ENCODE measurements at regions of chr2 and their contacts with region 1.

Region 1: DNA sequence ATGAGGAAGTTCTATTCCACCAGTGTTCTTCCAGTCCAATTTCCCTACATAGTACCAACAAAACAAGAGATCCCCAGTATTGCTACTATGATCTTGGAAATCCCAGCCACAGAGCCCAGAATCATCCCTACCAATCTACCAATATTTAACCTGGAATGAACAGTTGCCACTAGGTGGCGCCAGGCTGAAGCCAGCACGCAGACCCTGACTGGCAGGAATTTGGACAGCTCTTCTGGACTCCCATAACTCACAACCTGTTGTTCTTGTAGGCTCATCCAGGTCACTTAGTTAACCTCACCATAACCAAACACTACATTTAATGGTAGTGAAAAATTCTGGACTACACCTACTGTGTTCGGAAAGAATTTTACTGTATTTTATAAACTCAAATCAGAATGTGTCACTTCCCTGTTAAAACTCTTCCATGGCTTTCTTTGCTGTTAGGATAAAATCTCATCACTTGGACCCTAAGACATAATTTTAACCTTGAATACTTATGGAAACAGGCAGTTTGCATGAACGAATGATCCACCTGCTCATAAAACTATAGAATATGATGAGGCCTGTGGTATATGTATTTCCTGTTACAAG is 59.8 kb upstream of the SLC38A11 start:
- DNase-seq: peak in 1 of 2 experiments; percentile 85
- H3K4me3 ChIP-seq: no peak overlapping the region
- H3K27ac ChIP-seq: no peak overlapping the region
- H3K4me1 ChIP-seq: peaks cover 0 to 5% (median under 1%) of the 10 kb centered on the region in 4 experiments; a peak in 2 of 7 replicates
- H3K27me3 ChIP-seq: no peaks in the 10 kb centered on the region
- CTCF ChIP-seq: peak; percentile 84 to 86 (median 86)
- EP300 ChIP-seq: no peak
- POLR2A ChIP-seq: no peak
- RAD21 ChIP-seq: peak; percentile 81 to 83

Region 2: GRCh38 chr2:164992818-164993217 is 22.3 kb before region 1 on chr2:
- CTCF ChIA-PET with region 1: interaction called, 22 read pairs
- POLR2A ChIA-PET with region 1: no interaction called
- DNase-seq: no peak
- H3K4me3 ChIP-seq: no peak overlapping the region
- H3K27ac ChIP-seq: no peak overlapping the region
- H3K4me1 ChIP-seq: no peaks in the 10 kb centered on the region
- H3K27me3 ChIP-seq: no peaks in the 10 kb centered on the region
- CTCF ChIP-seq: peak in 2 of 3 experiments; percentile 47 to 48; a peak in 2 of 4 replicates
- EP300 ChIP-seq: no peak
- POLR2A ChIP-seq: no peak
- RAD21 ChIP-seq: peak; percentile 74 to 80

Region 3: GRCh38 chr2:165070076-165070475 is 54.9 kb after region 1 on chr2:
- CTCF ChIA-PET with region 1: interaction called, 34 read pairs
- POLR2A ChIA-PET with region 1: no interaction called
- DNase-seq: peak in 1 of 2 experiments; percentile 33
- H3K4me3 ChIP-seq: no peak overlapping the region
- H3K27ac ChIP-seq: peak overlapping the region; percentile 58
- H3K4me1 ChIP-seq: peaks cover 2 to 16% (median 6%) of the 10 kb centered on the region in 4 experiments; a peak in 5 of 7 replicates
- H3K27me3 ChIP-seq: no peaks in the 10 kb centered on the region
- CTCF ChIP-seq: no peak
- EP300 ChIP-seq: no peak
- POLR2A ChIP-seq: no peak
- RAD21 ChIP-seq: no peak

Region 4: GRCh38 chr2:165157160-165157559 is 142.0 kb after region 1 on chr2:
- CTCF ChIA-PET with region 1: interaction called, 17 read pairs
- POLR2A ChIA-PET with region 1: no interaction called
- DNase-seq: no peak
- H3K4me3 ChIP-seq: no peak overlapping the region
- H3K27ac ChIP-seq: no peak overlapping the region
- H3K4me1 ChIP-seq: no peaks in the 10 kb centered on the region
- H3K27me3 ChIP-seq: no peaks in the 10 kb centered on the region
- CTCF ChIP-seq: no peak
- EP300 ChIP-seq: no peak
- POLR2A ChIP-seq: no peak
- RAD21 ChIP-seq: no peak

Region 5: DNA sequence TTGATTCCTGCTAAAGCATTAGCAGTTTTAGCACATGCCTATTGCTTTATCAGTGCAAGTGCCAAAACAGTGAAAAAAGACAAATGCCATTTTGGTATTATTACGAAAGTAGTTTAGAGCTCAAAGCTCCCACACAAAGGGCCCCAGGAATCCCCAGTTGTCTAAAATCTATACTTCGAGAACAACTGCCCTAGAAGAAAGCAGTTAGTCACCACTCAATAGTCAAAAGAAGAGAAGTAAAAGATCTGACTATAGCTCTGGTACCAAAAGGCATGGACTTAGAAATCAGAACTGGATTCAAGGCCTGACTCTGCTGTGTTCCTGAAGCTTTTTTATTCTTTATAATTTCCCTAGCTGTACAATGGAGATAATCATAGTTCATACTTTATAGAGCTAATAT is 166.9 kb after region 1 on chr2:
- CTCF ChIA-PET with region 1: interaction called, 40 read pairs
- POLR2A ChIA-PET with region 1: no interaction called
- DNase-seq: no peak
- H3K4me3 ChIP-seq: no peak overlapping the region
- H3K27ac ChIP-seq: no peak overlapping the region
- H3K4me1 ChIP-seq: no peaks in the 10 kb centered on the region
- H3K27me3 ChIP-seq: no peaks in the 10 kb centered on the region
- CTCF ChIP-seq: no peak
- EP300 ChIP-seq: no peak
- POLR2A ChIP-seq: no peak
- RAD21 ChIP-seq: no peak

Region 6: DNA sequence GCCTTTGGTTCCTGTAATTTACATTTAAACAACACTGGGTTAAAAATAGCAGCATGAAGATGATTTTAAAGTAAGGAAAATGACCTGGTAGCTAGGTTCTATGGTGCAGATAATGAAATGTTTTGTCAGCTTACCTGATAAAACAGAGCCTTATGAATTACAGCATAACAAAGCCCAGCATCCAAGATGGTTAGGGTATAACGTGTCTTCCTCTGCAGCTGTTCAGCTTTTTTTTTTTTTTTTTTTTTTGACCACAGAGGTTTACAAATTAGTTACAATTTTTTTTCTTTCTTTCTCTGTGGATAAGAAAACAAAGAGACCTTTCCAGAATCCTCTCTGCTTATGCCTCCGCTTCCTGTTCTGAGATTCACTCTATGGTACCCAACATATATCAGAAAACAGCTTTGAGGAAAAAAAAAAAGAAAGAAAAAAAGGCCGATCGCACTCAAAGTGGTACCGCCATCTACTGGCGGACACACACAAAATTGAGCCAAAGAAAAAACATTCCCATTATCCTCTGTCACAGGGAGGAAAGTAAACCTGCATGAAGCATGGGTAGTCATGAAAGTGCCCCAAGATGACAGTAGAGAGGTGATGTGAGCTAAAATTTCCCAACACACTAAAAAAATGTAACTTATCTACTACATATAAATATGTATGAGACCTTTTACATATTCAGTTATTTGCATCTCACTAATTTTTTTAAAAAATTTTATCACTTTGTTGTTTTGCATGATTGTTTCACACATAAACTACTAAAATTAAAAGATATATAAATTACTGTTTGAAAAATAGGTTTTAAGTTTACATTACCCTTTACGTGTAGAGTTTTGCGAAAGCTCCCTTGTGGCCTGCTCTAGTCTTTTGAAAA is 188.8 kb after region 1 on chr2 and contains the start of gene SCN3A:
- CTCF ChIA-PET with region 1: interaction called, 218 read pairs
- POLR2A ChIA-PET with region 1: no interaction called
- DNase-seq: no peak
- H3K4me3 ChIP-seq: no peak within 1 kb of the TSS
- H3K27ac ChIP-seq: no peak within 1 kb of the TSS
- H3K4me1 ChIP-seq: no peaks in the 10 kb centered on the region
- H3K27me3 ChIP-seq: no peaks in the 10 kb centered on the region
- CTCF ChIP-seq: peak in 2 of 3 experiments; percentile 76 to 80; a peak in 3 of 4 replicates
- EP300 ChIP-seq: no peak
- POLR2A ChIP-seq: no peak
- RAD21 ChIP-seq: peak; percentile 83 to 86
- total RNA-seq, gene SCN3A: not detected in 2 replicates